ENCODE measurements at regions of chr5 and their contacts with region 1.

Region 1: DNA sequence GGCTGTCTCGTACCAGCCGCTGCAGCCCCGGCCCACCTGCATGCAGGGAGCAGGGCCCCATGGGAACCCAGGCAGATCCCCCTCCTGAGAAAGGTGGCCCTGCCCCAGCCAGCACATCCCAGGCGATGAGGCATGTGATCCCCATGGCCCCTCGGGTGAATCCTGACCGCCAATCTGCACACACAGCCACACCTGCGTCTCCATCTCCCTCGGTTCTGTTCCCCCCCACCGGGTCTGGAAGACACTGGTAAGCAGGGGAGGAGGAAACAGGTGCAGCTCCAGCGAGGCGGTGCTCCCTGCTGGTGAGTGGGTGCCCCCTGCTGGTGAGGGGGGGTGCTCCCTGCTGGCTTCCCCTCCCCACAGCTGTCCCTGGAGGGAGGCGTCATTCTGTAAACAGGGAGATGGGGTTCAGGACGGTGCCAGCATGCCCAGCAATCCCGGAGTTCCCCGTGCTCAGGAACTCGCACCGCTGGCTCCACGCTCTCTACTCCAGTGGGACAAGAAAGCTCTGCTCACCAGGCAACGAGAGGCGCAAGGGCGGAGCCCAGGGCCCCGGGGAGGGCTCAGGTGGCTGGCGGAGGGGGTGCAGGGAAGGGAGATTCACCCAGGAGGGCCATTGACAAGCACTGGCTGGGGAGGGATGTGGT is 28.4 kb upstream of the SLC12A7 start:
- DNase-seq: peak; percentile 69 to 96
- H3K4me3 ChIP-seq: no peak overlapping the region
- H3K27ac ChIP-seq: no peak overlapping the region
- H3K4me1 ChIP-seq: 0 out of 2 replicates have a peak, but pooled peaks cover 3% of the 10 kb centered on the region
- H3K27me3 ChIP-seq: peaks cover 7% of the 10 kb centered on the region
- CTCF ChIP-seq: peak; percentile 99

Region 2: DNA sequence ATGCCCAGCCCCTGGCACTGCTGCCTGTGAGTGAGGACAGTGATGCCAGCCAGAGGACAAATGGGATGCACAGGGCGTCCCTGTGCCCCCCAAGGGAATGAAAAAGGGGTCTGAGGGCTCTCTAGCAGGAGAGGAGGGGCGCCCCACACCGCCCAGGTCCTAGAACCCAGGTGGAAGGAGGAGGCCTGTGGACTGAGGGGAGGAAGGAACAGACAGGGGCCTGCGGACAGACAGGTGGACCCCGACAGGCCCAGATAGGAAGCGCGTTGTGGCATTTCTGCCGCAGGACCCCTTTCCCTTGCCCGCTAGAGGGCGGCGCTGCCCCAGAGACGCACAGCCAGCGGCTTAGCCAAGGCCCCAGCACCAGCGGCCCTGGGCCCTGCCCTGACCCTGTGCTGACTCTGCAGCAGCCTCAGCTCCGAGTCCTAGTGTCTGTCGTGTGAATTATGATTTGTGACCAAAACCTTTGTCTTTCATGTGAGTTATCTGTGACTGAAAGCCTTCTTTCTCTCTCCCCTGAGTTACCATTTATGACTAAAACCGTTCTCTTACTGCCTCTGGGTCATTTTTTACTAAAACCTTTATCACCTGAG is 216.9 kb before region 1 on chr5:
- CTCF ChIA-PET with region 1: interaction called, 10 read pairs
- POLR2A ChIA-PET with region 1: no interaction called
- intact Hi-C with region 1: loop called (anchors 1 kb)
- DNase-seq: peak; percentile 60 to 95
- H3K4me3 ChIP-seq: no peak overlapping the region
- H3K27ac ChIP-seq: no peak overlapping the region
- H3K4me1 ChIP-seq: no peaks in the 10 kb centered on the region
- H3K27me3 ChIP-seq: no peaks in the 10 kb centered on the region
- CTCF ChIP-seq: peak; percentile 96

Region 3: DNA sequence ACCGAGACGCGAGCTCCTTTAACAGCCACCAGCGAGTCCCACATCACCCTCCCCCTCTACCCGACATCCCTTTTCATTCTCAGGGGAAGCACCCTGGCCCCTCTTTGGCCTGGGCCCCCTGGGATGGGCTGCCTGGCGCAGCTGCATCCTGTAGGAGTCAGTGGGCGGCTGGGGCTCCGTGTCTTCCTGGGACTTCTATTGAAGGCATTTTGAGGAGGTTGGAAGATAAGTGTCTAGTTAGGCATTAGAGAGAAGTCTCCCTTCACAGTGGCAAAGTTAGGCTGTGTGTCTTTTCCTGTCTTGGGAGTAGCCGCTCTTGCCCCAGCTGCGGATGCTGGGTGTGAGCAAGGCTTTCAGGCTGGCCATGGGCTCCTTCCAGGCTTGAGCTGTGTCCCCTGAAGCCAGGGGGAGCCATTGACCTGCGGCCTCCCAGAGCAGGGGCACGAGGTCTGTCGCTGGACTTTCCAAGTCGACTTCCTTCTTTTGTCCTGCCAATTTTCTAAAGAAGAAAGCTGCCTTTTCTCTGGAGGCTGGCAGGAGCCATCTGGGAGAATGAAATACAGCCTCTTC is 150.2 kb before region 1 on chr5:
- CTCF ChIA-PET with region 1: no interaction called
- POLR2A ChIA-PET with region 1: no interaction called
- intact Hi-C with region 1: loop called (anchors 2 kb)
- DNase-seq: peak in 1 of 2 experiments; percentile 52
- H3K4me3 ChIP-seq: no peak overlapping the region
- H3K27ac ChIP-seq: no peak overlapping the region
- H3K4me1 ChIP-seq: peaks cover 8% of the 10 kb centered on the region
- H3K27me3 ChIP-seq: peaks cover 87% of the 10 kb centered on the region
- CTCF ChIP-seq: 0 out of 2 replicates have a peak, but pooled peaks have one; percentile 21

Region 4: DNA sequence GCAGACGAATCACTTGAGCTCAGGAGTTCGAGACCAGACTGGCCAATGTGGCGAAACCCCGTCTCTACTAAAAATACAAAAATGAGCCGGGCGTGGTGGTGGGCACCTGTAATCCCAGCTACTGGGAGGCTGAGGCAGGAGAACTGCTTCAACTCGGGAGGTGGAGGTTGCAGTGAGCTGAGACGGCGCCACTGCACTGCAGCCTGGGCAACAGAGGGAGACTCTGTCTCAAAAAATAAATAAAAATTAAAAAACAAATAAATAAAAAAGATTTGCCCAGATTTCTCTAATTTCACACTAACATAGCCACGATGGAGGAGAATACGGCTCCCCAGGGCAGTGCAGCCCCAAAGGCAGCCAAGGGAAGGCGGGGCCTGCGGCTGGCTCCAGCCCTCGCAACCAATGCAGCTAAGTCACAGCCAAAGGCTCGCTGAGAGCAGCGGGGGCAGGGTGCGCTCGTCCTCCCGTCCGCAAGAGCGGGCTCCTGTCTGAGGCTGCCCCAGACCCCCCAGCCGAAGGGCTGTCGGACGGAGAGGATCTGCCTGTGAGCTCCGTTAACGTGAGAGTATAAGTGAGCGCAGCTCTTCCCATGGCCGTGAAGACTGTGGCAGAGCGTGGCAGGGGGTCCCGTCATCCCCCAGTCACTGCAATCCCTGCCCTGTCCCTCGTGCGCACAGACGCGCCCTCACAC is 71.9 kb before region 1 on chr5:
- CTCF ChIA-PET with region 1: interaction called, 8 read pairs
- POLR2A ChIA-PET with region 1: no interaction called
- intact Hi-C with region 1: loop called (anchors 5 kb)
- DNase-seq: no peak
- H3K4me3 ChIP-seq: no peak overlapping the region
- H3K27ac ChIP-seq: no peak overlapping the region
- H3K4me1 ChIP-seq: no peaks in the 10 kb centered on the region
- H3K27me3 ChIP-seq: no peaks in the 10 kb centered on the region
- CTCF ChIP-seq: no peak

Region 5: GRCh38 chr5:1161833-1162229 is 21.5 kb after region 1 on chr5:
- CTCF ChIA-PET with region 1: interaction called, 6 read pairs
- POLR2A ChIA-PET with region 1: interaction called, 3 read pairs
- intact Hi-C with region 1: loop called (anchors 2 kb)
- DNase-seq: peak in 1 of 2 experiments; percentile 97
- H3K4me3 ChIP-seq: no peak overlapping the region
- H3K27ac ChIP-seq: no peak overlapping the region
- H3K4me1 ChIP-seq: peaks cover 12% of the 10 kb centered on the region
- H3K27me3 ChIP-seq: peaks cover 5% of the 10 kb centered on the region; the same call in 1 of the 2 replicates
- CTCF ChIP-seq: no peak